Posterior cingulate gyrus (tissue), 11 donors: ENCODE measurements at regions of chr1 and their contacts with region 1.

Region 1: GRCh38 chr1:114979278-114979891 is 50.2 kb upstream of the TSHB start:
- DNase-seq: peak in 6 of 10 donors; percentile 8 to 64 (median 56)

Region 2: DNA sequence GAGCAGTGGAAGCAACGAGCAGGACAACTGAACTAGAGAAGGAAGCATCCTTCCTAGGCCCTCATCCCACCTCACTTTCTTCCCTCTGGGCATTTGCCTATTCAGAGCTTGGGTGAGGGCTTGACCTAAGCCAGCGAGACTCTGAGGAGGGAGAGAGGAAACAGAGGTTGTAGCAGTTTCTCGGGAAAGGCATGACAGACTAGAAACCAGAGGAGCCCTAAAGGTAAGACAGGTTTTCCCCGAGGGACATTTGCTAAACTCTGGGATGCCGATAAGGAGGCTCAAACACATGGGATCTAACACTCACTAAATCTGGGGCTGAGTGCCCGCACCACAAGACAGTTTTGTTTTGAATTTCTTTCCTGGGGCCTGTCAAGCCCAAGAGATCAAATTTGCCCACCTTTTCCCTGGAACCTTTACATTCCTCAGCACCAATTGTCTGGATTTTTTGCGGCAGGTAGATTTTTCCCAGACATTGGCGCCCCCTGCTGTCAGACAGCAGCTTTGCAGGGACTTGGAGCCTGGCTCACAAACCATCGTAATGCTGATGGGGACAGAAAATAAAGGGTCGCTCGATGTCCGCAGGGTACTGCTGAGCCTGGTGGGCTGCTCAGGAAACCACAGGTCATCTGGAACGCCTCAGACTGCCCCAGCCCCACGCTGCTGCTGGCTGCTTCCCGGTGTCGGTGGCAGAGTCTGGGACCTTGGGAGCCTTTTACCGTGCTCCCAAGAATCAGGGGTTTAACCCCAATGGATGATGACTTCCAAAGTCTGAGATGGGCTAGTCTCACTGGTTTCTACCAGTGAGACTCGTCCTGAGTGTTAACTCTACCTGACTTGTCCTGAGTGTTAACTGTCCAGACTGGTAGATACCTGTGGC is 133.4 kb after region 1 on chr1:
- intact Hi-C with region 1: loop called (anchors 2 kb)
- DNase-seq: peak in 6 of 10 donors; percentile 31 to 90 (median 56)

Region 3: GRCh38 chr1:115595279-115596079 is 616.1 kb after region 1 on chr1:
- intact Hi-C with region 1: loop called (anchors 2 kb)
- DNase-seq: peak; percentile 75 to 97 (median 88)